ENCODE measurements at regions of chrX and their contacts with region 1.

Region 1: GRCh38 chrX:41802958-41803357 is 79.0 kb downstream of the GPR82 start:
- DNase-seq: no peak
- ATAC-seq: no peak
- H3K4me3 ChIP-seq: no peak overlapping the region
- H3K4me3 Mint-ChIP-seq: no peak overlapping the region
- H3K27ac ChIP-seq: no peak overlapping the region
- H3K27ac Mint-ChIP-seq: no peak overlapping the region
- H3K4me1 ChIP-seq: peaks cover 0 to 12% of the 10 kb centered on the region in 2 experiments
- H3K4me1 Mint-ChIP-seq: peaks cover 21 to 51% (median 34%) of the 10 kb centered on the region in 3 donors
- H3K27me3 ChIP-seq: no peaks in the 10 kb centered on the region
- H3K27me3 Mint-ChIP-seq: peaks cover 0 to 7% of the 10 kb centered on the region in 2 donors

Region 2: GRCh38 chrX:41734530-41734929 is 68.4 kb before region 1 on chrX:
- CTCF ChIA-PET with region 1: no interaction called
- POLR2A ChIA-PET with region 1: no interaction called
- DNase-seq: peak in 1 of 35 experiments; percentile 29
- ATAC-seq: peak in 1 of 4 experiments; percentile 32
- H3K4me3 ChIP-seq: no peak overlapping the region
- H3K4me3 Mint-ChIP-seq: no peak overlapping the region
- H3K27ac ChIP-seq: no peak overlapping the region
- H3K27ac Mint-ChIP-seq: peak overlapping the region; percentile 9 to 74
- H3K4me1 ChIP-seq: peaks cover 6 to 10% of the 10 kb centered on the region in 2 experiments
- H3K4me1 Mint-ChIP-seq: peaks cover 5 to 26% (median 12%) of the 10 kb centered on the region in 3 donors
- H3K27me3 ChIP-seq: no peaks in the 10 kb centered on the region
- H3K27me3 Mint-ChIP-seq: peaks cover 0 to 8% of the 10 kb centered on the region in 2 donors

Region 3: DNA sequence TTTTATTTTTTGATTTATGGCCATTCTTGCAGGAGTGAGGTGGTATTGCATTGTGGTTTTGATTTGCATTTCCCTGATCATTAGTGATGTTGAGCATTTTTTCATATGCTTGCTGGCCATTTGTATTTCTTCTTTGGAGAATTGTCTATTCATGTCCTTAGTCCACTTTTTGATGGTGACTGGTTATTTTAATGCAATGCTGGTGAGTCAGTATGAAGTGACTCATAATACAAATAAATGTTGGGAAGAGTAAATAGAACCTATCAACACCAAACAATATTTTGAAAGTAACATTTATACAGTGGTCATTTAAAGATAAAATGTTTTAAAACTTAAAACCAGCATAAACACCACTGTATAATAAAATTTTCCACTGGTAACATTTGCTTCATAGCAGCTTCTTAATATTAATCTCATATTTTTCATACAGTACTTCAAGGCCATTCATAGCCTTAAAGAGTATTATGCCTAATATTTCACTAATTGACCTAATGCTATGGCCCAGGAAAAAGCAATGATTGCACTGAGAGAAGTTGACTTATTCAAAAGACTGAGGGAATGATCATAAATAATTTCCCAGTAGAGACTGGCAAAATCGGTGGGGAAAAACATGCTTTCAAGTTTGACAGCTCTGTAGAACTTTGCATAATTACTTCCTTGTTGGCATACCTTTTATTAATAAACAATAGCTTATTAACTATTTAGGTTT is 86.5 kb after region 1 on chrX:
- CTCF ChIA-PET with region 1: interaction called in 1 of 2 experiments, 11 read pairs
- POLR2A ChIA-PET with region 1: no interaction called
- DNase-seq: no peak
- ATAC-seq: no peak
- H3K4me3 ChIP-seq: no peak overlapping the region
- H3K4me3 Mint-ChIP-seq: no peak overlapping the region
- H3K27ac ChIP-seq: no peak overlapping the region
- H3K27ac Mint-ChIP-seq: no peak overlapping the region
- H3K4me1 ChIP-seq: peaks cover 0 to 2% of the 10 kb centered on the region in 2 experiments
- H3K4me1 Mint-ChIP-seq: peaks cover 17 to 47% (median 30%) of the 10 kb centered on the region in 3 donors
- H3K27me3 ChIP-seq: no peaks in the 10 kb centered on the region
- H3K27me3 Mint-ChIP-seq: no peaks in the 10 kb centered on the region

Region 4: GRCh38 chrX:43557792-43558191 is 1754.8 kb after region 1 on chrX:
- CTCF ChIA-PET with region 1: interaction called, 9 to 17 read pairs
- POLR2A ChIA-PET with region 1: no interaction called
- DNase-seq: peak; percentile 15 to 78 (median 48)
- ATAC-seq: peak; percentile 38 to 63 (median 48)
- H3K4me3 ChIP-seq: no peak overlapping the region
- H3K4me3 Mint-ChIP-seq: no peak overlapping the region
- H3K27ac ChIP-seq: no peak overlapping the region
- H3K27ac Mint-ChIP-seq: no peak overlapping the region
- H3K4me1 ChIP-seq: no peaks in the 10 kb centered on the region
- H3K4me1 Mint-ChIP-seq: peaks cover 0 to 7% (median 1%) of the 10 kb centered on the region in 3 donors
- H3K27me3 ChIP-seq: no peaks in the 10 kb centered on the region
- H3K27me3 Mint-ChIP-seq: peaks cover 0 to 17% of the 10 kb centered on the region in 2 donors

Region 5: GRCh38 chrX:43750248-43750676 is 1947.3 kb after region 1 on chrX:
- CTCF ChIA-PET with region 1: interaction called in 1 of 2 experiments, 12 read pairs
- POLR2A ChIA-PET with region 1: no interaction called
- DNase-seq: peak in 33 of 35 experiments; percentile 2 to 64 (median 24)
- ATAC-seq: peak; percentile 57 to 75 (median 71)
- H3K4me3 ChIP-seq: no peak overlapping the region
- H3K4me3 Mint-ChIP-seq: no peak overlapping the region
- H3K27ac ChIP-seq: no peak overlapping the region
- H3K27ac Mint-ChIP-seq: no peak overlapping the region
- H3K4me1 ChIP-seq: no peaks in the 10 kb centered on the region
- H3K4me1 Mint-ChIP-seq: peaks cover 0 to 3% (median 0%) of the 10 kb centered on the region in 3 donors
- H3K27me3 ChIP-seq: no peaks in the 10 kb centered on the region
- H3K27me3 Mint-ChIP-seq: peaks cover 0 to 13% of the 10 kb centered on the region in 2 donors